ENCODE measurements at regions of chr4 and their contacts with region 1.

Region 1: GRCh38 chr4:144295286-144295995 is 154.9 kb upstream of the GYPA start:
- DNase-seq: peak; percentile 6 to 36
- H3K4me3 ChIP-seq: no peak overlapping the region
- H3K27ac ChIP-seq: no peak overlapping the region
- H3K4me1 ChIP-seq: no peaks in the 10 kb centered on the region
- H3K27me3 ChIP-seq: no peaks in the 10 kb centered on the region
- CTCF ChIP-seq: no peak

Region 2: DNA sequence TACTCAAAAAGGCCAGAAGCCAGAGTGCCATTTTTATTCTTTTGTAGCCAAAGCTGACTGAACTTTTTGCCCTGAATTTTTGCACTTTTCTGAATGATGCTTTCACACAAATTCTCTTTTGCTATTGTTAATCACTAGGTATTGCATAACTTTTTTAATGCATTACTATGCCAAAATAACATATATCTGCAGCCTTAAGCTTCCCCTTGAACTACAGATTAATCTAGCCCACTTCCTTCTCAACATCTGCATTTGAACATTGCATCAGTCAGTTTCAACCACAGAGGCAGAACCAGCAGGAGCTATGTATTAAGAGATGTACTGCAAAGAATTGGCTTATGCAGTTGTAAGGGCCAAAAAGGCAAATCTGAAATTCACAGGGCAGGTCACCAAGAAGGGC is 42.7 kb after region 1 on chr4:
- CTCF ChIA-PET with region 1: no interaction called
- POLR2A ChIA-PET with region 1: no interaction called
- intact Hi-C with region 1: loop called (anchors 2 kb)
- DNase-seq: no peak
- H3K4me3 ChIP-seq: no peak overlapping the region
- H3K27ac ChIP-seq: peak overlapping the region; percentile 74
- H3K4me1 ChIP-seq: peaks cover 6% of the 10 kb centered on the region; the same call in 1 of the 2 replicates
- H3K27me3 ChIP-seq: no peaks in the 10 kb centered on the region
- CTCF ChIP-seq: no peak

Region 3: GRCh38 chr4:144750348-144750747 is 454.9 kb after region 1 on chr4:
- CTCF ChIA-PET with region 1: no interaction called
- POLR2A ChIA-PET with region 1: no interaction called
- intact Hi-C with region 1: no loop called
- DNase-seq: no peak
- H3K4me3 ChIP-seq: no peak overlapping the region
- H3K27ac ChIP-seq: no peak overlapping the region
- H3K4me1 ChIP-seq: no peaks in the 10 kb centered on the region
- H3K27me3 ChIP-seq: no peaks in the 10 kb centered on the region
- CTCF ChIP-seq: no peak